ENCODE measurements at regions of chr7 and their contacts with region 1.

Region 1: DNA sequence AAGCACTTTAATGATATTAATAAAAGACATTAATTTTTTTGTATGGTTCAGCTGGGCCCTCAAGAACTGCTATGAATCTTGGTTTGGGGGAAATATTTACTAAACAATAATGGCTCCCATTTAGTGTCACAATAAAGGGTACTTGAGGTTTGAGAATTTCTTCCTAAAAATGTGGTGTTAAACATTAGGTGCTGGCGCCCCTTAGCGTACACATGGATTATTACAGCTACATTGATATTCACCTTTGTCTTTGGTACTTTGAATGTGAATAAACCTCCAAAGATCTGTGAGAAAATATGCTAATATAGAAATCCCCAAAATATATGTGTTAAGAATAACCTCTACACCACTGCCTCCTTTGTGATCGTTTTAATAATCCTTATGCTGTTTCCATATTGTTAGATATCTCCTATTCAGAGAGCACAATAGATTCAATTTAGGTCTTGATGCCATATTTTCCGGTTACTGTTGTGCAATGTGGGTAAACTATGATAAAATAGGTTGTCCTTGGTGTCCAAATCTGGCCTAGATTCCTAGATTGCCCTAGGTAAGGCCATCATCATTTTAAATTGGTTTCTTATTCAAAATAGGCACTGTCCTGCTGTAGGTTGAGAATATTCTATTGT is 161.8 kb upstream of the CACNA2D1 start:
- DNase-seq: peak; percentile 48
- H3K4me3 Mint-ChIP-seq: no peak overlapping the region
- H3K27ac Mint-ChIP-seq: no peak overlapping the region
- H3K4me1 Mint-ChIP-seq: no peaks in the 10 kb centered on the region
- H3K27me3 Mint-ChIP-seq: peaks cover 28% of the 10 kb centered on the region
- CTCF ChIP-seq: peak; percentile 54

Region 2: GRCh38 chr7:81715984-81716588 is 889.3 kb before region 1 on chr7:
- CTCF ChIA-PET with region 1: no interaction called
- POLR2A ChIA-PET with region 1: no interaction called
- intact Hi-C with region 1: no loop called
- DNase-seq: peak; percentile 58
- H3K4me3 Mint-ChIP-seq: no peak overlapping the region
- H3K27ac Mint-ChIP-seq: no peak overlapping the region
- H3K4me1 Mint-ChIP-seq: no peaks in the 10 kb centered on the region
- H3K27me3 Mint-ChIP-seq: no peaks in the 10 kb centered on the region
- CTCF ChIP-seq: peak; percentile 75

Region 3: GRCh38 chr7:82234457-82235049 is 370.8 kb before region 1 on chr7:
- CTCF ChIA-PET with region 1: interaction called, 3 read pairs
- POLR2A ChIA-PET with region 1: no interaction called
- intact Hi-C with region 1: loop called (anchors 10 kb)
- DNase-seq: peak; percentile 49
- H3K4me3 Mint-ChIP-seq: no peak overlapping the region
- H3K27ac Mint-ChIP-seq: no peak overlapping the region
- H3K4me1 Mint-ChIP-seq: no peaks in the 10 kb centered on the region
- H3K27me3 Mint-ChIP-seq: peaks cover 92% of the 10 kb centered on the region
- CTCF ChIP-seq: peak; percentile 36

Region 4: GRCh38 chr7:82714883-82715282 is 109.5 kb after region 1 on chr7:
- CTCF ChIA-PET with region 1: no interaction called
- POLR2A ChIA-PET with region 1: no interaction called
- intact Hi-C with region 1: no loop called
- DNase-seq: no peak
- H3K4me3 Mint-ChIP-seq: no peak overlapping the region
- H3K27ac Mint-ChIP-seq: no peak overlapping the region
- H3K4me1 Mint-ChIP-seq: no peaks in the 10 kb centered on the region
- H3K27me3 Mint-ChIP-seq: no peaks in the 10 kb centered on the region
- CTCF ChIP-seq: no peak